ENCODE measurements at regions of chr14 and their contacts with region 1.

Region 1: DNA sequence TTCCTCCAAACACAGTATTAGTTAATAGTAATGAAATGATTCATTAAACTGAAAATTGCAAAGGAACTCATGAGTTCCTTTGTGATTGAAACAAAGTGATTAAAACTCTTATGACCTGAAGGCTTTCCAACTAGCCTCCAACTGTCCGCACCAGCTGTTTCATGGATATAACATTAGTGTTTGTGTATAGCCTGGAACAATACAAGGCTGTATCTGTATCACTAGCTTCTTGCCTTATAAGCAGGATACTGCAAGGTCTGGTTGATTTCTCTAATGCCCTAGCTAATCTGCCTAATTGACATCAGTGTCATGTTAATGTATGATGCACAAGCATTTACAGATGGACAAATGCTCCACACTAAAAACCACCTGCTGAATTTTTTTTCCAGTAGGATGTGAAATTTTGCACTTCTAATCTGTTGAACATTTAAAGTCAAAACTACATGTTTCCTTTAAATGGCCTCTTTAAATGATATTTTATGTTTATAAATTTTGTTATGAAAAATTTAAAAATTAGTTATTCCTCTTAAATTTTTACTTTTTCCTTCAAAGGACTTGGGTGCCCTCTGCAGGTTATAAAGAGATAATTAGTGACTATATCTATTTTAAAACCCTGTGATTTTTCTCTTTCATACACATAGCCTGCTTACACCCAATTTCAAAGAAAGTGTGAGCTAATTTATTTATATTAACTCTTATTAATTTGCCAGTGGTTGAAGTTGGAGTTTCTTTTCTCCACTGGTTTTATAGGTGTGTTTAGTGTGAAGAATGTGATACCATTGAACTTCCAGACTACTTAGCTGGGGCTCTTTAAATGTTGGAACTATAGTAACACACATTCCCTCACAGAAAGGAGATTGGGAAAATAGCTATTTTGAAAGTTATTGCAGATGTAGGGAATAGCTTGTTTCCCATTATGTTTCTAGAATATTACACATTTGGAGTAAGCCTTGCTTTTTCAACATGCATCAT is 25.4 kb downstream of the AP5M1 start:
- DNase-seq: no peak
- ATAC-seq: no peak
- H3K4me3 ChIP-seq: no peak overlapping the region
- H3K27ac ChIP-seq: no peak overlapping the region
- H3K4me1 ChIP-seq: no peaks in the 10 kb centered on the region
- H3K27me3 ChIP-seq: no peaks in the 10 kb centered on the region
- CTCF ChIP-seq: peak in 2 of 3 experiments; percentile 12 to 41; a peak in 1 of 6 replicates
- EP300 ChIP-seq: no peak
- POLR2A ChIP-seq: no peak
- RAD21 ChIP-seq: peak in 1 of 2 experiments; percentile 15; a peak in 1 of 4 replicates

Region 2: DNA sequence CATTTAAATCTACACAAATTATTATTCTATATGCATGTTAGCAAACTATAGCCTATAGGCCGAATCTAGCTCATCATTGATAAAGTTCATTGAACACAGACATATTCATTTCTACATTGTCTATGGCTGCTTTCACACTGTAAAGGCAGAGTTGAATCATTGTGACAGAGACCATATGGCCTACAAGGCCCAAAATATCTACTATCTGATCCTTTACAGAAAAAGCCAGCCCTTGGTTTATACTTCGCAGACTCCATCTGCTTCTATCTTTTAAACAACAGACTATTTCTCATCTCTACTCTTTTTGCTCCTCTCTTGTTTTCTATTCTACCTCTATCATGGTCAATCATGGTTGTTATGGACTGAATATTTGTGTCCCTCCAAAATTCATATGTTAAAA is 216.1 kb before region 1 on chr14:
- CTCF ChIA-PET with region 1: no interaction called
- POLR2A ChIA-PET with region 1: no interaction called
- in situ Hi-C with region 1: no loop called
- intact Hi-C with region 1: loop called (anchors 10 kb)
- DNase-seq: no peak
- ATAC-seq: no peak
- H3K4me3 ChIP-seq: no peak overlapping the region
- H3K27ac ChIP-seq: no peak overlapping the region
- H3K4me1 ChIP-seq: no peaks in the 10 kb centered on the region
- H3K27me3 ChIP-seq: no peaks in the 10 kb centered on the region; a peak in 2 of 5 replicates
- CTCF ChIP-seq: no peak
- EP300 ChIP-seq: no peak
- POLR2A ChIP-seq: no peak
- RAD21 ChIP-seq: no peak

Region 3: DNA sequence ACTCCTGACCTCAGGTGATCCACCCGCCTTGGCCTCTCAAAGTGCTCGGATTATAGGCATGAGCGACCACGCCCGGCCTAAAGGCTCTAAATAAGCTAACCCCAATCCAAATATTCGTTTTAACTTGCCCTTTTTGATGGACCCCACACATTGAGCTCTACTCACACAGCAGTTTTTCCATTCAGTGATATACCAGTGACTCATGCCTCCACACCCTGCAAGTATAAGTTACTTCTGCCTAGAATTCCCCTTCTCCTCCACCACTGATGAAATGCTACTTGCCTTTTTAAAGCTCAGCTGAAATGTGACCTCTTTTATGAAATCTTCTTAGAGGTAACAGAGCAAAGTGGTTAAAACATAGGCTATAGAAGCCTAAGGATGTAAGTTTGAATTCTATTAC is 94.2 kb before region 1 on chr14:
- CTCF ChIA-PET with region 1: no interaction called
- POLR2A ChIA-PET with region 1: no interaction called
- in situ Hi-C with region 1: no loop called
- intact Hi-C with region 1: loop called (anchors 10 kb)
- DNase-seq: no peak
- ATAC-seq: no peak
- H3K4me3 ChIP-seq: no peak overlapping the region
- H3K27ac ChIP-seq: no peak overlapping the region
- H3K4me1 ChIP-seq: no peaks in the 10 kb centered on the region
- H3K27me3 ChIP-seq: no peaks in the 10 kb centered on the region
- CTCF ChIP-seq: no peak
- EP300 ChIP-seq: no peak
- POLR2A ChIP-seq: no peak
- RAD21 ChIP-seq: no peak

Region 4: DNA sequence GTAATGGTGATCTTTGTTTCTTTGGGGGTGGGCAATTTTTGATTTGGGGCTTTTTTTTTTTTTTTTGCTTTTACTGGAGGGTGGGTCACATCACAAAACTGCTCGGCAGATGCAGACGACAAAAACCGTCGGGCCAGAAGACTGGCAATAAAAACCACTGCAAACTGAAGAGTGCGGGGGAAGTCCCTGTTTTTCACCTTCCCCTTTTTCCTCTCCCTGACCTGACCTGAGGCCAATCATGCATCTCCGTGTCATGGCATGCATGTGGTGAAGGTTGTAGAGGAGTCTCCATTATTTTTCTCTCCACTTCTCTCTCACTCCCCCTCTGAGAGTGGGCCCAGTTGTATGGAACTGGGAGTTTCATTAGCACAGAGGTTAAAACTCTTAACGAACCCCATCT is 32.1 kb after region 1 on chr14:
- CTCF ChIA-PET with region 1: no interaction called
- POLR2A ChIA-PET with region 1: no interaction called
- in situ Hi-C with region 1: no loop called
- intact Hi-C with region 1: no loop called
- DNase-seq: no peak
- ATAC-seq: no peak
- H3K4me3 ChIP-seq: no peak overlapping the region
- H3K27ac ChIP-seq: no peak overlapping the region
- H3K4me1 ChIP-seq: no peaks in the 10 kb centered on the region
- H3K27me3 ChIP-seq: no peaks in the 10 kb centered on the region
- CTCF ChIP-seq: no peak
- EP300 ChIP-seq: no peak
- POLR2A ChIP-seq: no peak
- RAD21 ChIP-seq: no peak

Measured in K562 (cell line).